Naive thymus-derived CD4-positive, alpha-beta T cell (primary cell): ENCODE measurements at regions of chrX and their contacts with region 1.

Region 1: DNA sequence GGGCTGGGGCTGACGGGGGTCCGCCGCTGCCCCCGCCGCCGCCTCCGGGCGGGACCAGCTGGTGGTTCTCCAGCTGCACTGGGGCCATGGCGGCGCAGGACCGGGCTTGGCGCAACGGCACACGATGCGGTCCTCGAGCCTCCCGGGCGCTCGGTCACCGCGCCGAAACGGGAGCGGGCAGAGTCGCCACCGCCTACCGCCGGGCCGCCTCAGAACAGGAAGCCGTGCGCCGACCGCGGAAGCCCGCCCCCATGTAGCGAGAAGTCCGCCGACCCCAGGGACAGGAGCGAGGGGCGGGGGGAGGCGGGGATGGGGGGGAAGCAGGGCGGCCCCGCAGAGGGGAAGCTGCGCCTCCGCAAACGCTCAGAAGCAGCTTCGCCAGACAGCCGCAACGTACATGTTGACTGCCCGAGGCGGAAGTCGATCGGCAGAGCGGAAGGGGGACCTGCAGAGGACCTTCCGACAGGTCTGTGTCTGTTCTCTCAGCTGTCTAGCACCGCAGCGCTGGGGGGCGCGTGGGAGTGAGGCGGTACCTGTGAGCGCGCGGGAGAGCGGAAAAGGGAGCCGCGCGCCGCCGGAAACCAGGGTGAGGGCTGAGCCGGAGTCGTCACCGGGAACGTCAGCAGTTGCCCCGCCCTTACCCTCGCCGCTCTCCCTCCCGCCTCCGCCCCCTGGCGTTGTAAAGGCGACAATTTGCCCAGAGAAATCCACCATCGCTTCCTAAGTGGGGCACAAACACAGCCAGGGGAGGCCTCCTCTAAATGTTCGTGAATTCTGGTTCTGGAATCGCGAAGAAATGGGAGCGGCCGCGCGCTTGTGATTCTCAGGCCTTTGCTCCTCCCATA is at the start of gene MED14:
- DNase-seq: peak; percentile 74 to 97 (median 96)
- ATAC-seq: peak; percentile 94
- H3K4me3 ChIP-seq: peak within 1 kb of the TSS; percentile 95
- H3K4me3 Mint-ChIP-seq: peak within 1 kb of the TSS; percentile 87 to 99 (median 95)
- H3K27ac ChIP-seq: peak within 1 kb of the TSS; percentile 93
- H3K27ac Mint-ChIP-seq: peak within 1 kb of the TSS; percentile 96 to 100 (median 98)
- H3K4me1 ChIP-seq: peaks cover 6 to 11% of the 10 kb centered on the region in 2 donors
- H3K4me1 Mint-ChIP-seq: peaks cover 9 to 71% (median 48%) of the 10 kb centered on the region in 7 donors
- H3K27me3 ChIP-seq: no peaks in the 10 kb centered on the region
- H3K27me3 Mint-ChIP-seq: no peaks in the 10 kb centered on the region
- total RNA-seq, gene MED14: 37.9 to 49.5 (median 44.3) TPM

Region 2: GRCh38 chrX:40108959-40109287 is 626.6 kb before region 1 on chrX:
- CTCF ChIA-PET with region 1: no interaction called
- POLR2A ChIA-PET with region 1: no interaction called
- intact Hi-C with region 1: loop called in 1 of 2 experiments (anchors 5 kb)
- DNase-seq: peak in 5 of 9 donors; percentile 44 to 64 (median 51)
- ATAC-seq: peak; percentile 59
- H3K4me3 ChIP-seq: peak overlapping the region; percentile 43
- H3K4me3 Mint-ChIP-seq: peak overlapping the region in 9 of 10 donors; percentile 54 to 87 (median 73)
- H3K27ac ChIP-seq: peak overlapping the region; percentile 23
- H3K27ac Mint-ChIP-seq: no peak overlapping the region
- H3K4me1 ChIP-seq: no peaks in the 10 kb centered on the region
- H3K4me1 Mint-ChIP-seq: peaks cover 0 to 28% (median 13%) of the 10 kb centered on the region in 7 donors
- H3K27me3 ChIP-seq: no peaks in the 10 kb centered on the region
- H3K27me3 Mint-ChIP-seq: peaks cover 0 to 7% (median 0%) of the 10 kb centered on the region in 5 donors

Region 3: DNA sequence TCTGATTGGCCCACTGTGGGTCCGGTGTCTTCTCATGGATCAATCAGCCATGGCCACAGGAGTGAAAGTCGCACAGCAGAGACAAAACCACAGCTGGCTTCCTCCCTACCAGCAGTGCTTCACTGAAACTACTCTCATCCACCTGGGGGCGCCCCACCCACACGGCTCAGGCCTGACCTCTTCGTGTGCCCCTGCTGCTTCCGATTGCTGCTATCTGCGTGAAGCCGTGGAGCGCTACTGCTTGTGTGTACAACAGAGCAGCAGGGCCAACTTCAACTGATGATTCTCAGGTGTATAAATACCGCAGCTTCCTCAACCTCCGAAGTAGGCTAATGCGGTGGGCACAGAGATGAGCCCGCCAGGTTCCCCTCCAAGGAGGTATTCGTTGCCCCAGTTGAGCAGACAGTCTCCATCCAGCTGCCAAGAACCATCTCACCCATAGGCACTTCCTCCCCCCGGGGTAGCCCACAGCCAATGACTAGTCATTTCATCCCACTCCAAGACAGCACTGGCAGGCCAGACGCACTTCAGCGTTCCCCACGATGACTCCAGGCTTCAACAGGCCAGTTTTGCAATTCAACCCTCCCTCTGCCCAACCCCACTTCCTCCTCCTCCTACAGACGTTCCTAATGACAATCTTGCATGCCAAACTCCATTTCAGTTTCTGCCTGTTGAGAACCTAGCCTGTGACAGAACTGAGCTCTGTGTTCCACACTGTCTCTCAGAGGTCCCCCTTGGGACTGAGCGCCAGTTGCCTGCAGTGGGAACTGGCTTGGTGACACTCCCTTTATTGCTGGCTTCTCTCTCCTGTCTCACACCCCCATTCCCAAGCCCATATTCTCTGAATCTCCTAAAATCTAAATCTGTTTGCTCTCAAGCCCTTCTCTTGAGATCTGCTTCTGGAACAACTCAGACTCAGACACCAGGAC is 196.1 kb before region 1 on chrX:
- CTCF ChIA-PET with region 1: no interaction called
- POLR2A ChIA-PET with region 1: no interaction called
- intact Hi-C with region 1: loop called in 1 of 2 experiments (anchors 2 kb)
- DNase-seq: peak; percentile 46 to 78 (median 65)
- ATAC-seq: peak; percentile 94
- H3K4me3 ChIP-seq: peak overlapping the region; percentile 13
- H3K4me3 Mint-ChIP-seq: peak overlapping the region; percentile 21 to 76 (median 50)
- H3K27ac ChIP-seq: no peak overlapping the region
- H3K27ac Mint-ChIP-seq: peak overlapping the region; percentile 64 to 90 (median 78)
- H3K4me1 ChIP-seq: peaks cover 4 to 6% of the 10 kb centered on the region in 2 donors
- H3K4me1 Mint-ChIP-seq: peaks cover 15 to 32% (median 24%) of the 10 kb centered on the region in 7 donors
- H3K27me3 ChIP-seq: no peaks in the 10 kb centered on the region
- H3K27me3 Mint-ChIP-seq: peaks cover 0 to 4% (median 0%) of the 10 kb centered on the region in 5 donors

Region 4: GRCh38 chrX:40580537-40581335 is 154.8 kb before region 1 on chrX and contains the start of gene ATP6AP2:
- CTCF ChIA-PET with region 1: no interaction called
- POLR2A ChIA-PET with region 1: interaction called, 10 read pairs
- intact Hi-C with region 1: loop called (anchors 1 to 2 kb)
- DNase-seq: peak; percentile 60 to 91 (median 88)
- ATAC-seq: peak; percentile 96
- H3K4me3 ChIP-seq: peak within 1 kb of the TSS; percentile 81
- H3K4me3 Mint-ChIP-seq: peak within 1 kb of the TSS; percentile 92 to 98 (median 94)
- H3K27ac ChIP-seq: peak within 1 kb of the TSS; percentile 90
- H3K27ac Mint-ChIP-seq: peak within 1 kb of the TSS; percentile 87 to 96 (median 95)
- H3K4me1 ChIP-seq: peaks cover 13 to 16% of the 10 kb centered on the region in 2 donors
- H3K4me1 Mint-ChIP-seq: peaks cover 21 to 38% (median 34%) of the 10 kb centered on the region in 7 donors
- H3K27me3 ChIP-seq: no peaks in the 10 kb centered on the region
- H3K27me3 Mint-ChIP-seq: no peaks in the 10 kb centered on the region
- total RNA-seq, gene ATP6AP2: 72.0 to 98.6 (median 82.5) TPM

Region 5: DNA sequence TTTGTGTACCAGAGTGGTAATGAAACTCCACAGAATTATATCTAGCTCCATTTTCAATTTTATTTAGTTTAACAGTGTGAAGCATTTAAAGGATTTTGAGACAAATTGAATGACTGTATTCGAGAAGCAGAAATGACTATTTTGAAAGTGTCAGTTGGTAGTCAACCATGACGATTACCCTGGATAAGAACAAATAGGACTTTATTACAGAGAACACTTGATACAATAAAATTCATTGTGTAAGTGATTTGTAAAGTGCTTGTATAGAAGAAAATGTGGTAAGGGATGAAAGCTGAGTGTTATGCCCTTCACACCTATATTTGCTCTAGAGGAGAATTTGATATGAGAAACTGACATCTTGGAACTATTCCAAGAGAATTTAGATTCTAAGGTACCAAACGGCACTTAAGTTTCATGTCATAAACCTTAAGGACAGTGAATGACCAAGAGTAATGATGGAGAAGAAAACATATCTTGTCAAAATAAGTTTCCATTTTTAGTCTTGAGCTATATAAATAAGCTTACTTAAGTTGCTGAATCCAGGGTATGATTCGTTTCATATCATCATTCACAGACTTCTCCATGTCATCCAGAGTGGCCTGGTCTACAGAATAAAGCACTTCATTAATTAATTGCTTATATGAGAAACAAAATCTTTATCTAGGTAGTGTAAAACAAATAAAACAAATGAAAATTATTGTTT is 34.8 kb before region 1 on chrX:
- CTCF ChIA-PET with region 1: no interaction called
- POLR2A ChIA-PET with region 1: no interaction called
- intact Hi-C with region 1: loop called in 1 of 2 experiments (anchors 2 kb)
- DNase-seq: no peak
- ATAC-seq: no peak
- H3K4me3 ChIP-seq: no peak overlapping the region
- H3K4me3 Mint-ChIP-seq: no peak overlapping the region
- H3K27ac ChIP-seq: no peak overlapping the region
- H3K27ac Mint-ChIP-seq: no peak overlapping the region
- H3K4me1 ChIP-seq: no peaks in the 10 kb centered on the region
- H3K4me1 Mint-ChIP-seq: peaks cover 0 to 3% (median 0%) of the 10 kb centered on the region in 7 donors
- H3K27me3 ChIP-seq: no peaks in the 10 kb centered on the region
- H3K27me3 Mint-ChIP-seq: no peaks in the 10 kb centered on the region

Region 6: DNA sequence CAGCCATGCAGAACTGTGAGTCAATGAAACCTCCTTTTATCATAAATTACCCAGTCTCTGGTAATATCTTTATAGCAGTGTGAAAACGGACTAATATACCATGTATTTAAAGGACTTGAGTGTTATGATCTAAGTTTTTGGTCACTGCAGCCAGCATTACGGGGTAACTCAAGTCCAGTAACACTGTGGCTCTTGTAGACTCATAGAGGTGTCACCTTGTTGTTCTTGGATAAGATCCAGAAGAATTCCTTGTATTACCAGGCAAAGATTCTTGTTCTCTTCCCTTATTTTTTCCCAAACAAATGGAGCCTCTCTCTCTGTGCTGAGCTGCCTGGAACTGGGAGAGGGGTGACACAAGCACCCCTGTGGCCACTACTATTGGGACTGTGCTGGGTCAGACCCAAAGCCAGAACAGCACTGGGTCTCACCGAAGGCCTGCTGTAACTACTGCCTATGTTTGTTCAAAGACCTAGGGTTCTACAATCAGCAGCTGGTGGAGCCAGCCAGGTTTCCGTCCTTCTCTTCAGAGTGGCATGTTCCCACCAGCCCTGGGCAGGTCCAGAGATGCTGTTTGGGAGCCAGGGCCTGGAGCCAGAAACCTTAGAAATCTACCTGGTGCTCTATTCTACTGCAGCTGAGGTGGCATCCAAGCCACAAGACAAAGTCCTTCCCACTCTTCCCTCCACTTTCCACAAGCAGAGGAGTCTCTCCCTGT is 43.5 kb after region 1 on chrX:
- CTCF ChIA-PET with region 1: no interaction called
- POLR2A ChIA-PET with region 1: no interaction called
- intact Hi-C with region 1: no loop called
- DNase-seq: no peak
- ATAC-seq: no peak
- H3K4me3 ChIP-seq: no peak overlapping the region
- H3K4me3 Mint-ChIP-seq: no peak overlapping the region
- H3K27ac ChIP-seq: no peak overlapping the region
- H3K27ac Mint-ChIP-seq: no peak overlapping the region
- H3K4me1 ChIP-seq: no peaks in the 10 kb centered on the region
- H3K4me1 Mint-ChIP-seq: no peaks in the 10 kb centered on the region
- H3K27me3 ChIP-seq: no peaks in the 10 kb centered on the region
- H3K27me3 Mint-ChIP-seq: no peaks in the 10 kb centered on the region

Region 7: GRCh38 chrX:40792433-40792832 is 56.9 kb after region 1 on chrX:
- CTCF ChIA-PET with region 1: no interaction called
- POLR2A ChIA-PET with region 1: no interaction called
- intact Hi-C with region 1: loop called (anchors 1 to 5 kb)
- DNase-seq: no peak
- ATAC-seq: no peak
- H3K4me3 ChIP-seq: no peak overlapping the region
- H3K4me3 Mint-ChIP-seq: no peak overlapping the region
- H3K27ac ChIP-seq: no peak overlapping the region
- H3K27ac Mint-ChIP-seq: no peak overlapping the region
- H3K4me1 ChIP-seq: no peaks in the 10 kb centered on the region
- H3K4me1 Mint-ChIP-seq: peaks cover 0 to 6% (median 0%) of the 10 kb centered on the region in 7 donors
- H3K27me3 ChIP-seq: no peaks in the 10 kb centered on the region
- H3K27me3 Mint-ChIP-seq: peaks cover 0 to 9% (median 0%) of the 10 kb centered on the region in 5 donors

Region 8: DNA sequence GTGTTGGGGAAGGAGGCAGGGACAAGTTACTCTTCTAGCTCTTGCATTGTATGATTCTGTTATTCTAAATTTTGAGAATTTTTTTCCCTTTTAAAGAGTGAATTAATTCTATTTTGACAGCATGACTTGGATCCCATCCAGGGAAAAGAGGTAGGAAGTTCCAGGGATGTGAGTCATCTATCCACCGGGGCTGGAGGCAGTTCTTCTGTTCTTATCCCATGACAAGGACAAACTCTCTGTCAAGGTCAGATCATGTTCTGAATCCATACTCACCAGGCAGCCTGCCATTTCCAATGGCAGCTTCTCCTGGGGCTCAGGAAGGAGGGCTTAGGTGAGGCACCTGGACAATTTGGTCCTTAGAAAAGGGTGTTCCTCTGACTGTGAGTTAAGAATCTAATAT is 131.8 kb after region 1 on chrX:
- CTCF ChIA-PET with region 1: no interaction called
- POLR2A ChIA-PET with region 1: no interaction called
- intact Hi-C with region 1: no loop called
- DNase-seq: no peak
- ATAC-seq: no peak
- H3K4me3 ChIP-seq: no peak overlapping the region
- H3K4me3 Mint-ChIP-seq: no peak overlapping the region
- H3K27ac ChIP-seq: no peak overlapping the region
- H3K27ac Mint-ChIP-seq: no peak overlapping the region
- H3K4me1 ChIP-seq: no peaks in the 10 kb centered on the region
- H3K4me1 Mint-ChIP-seq: peaks cover 0 to 3% (median 0%) of the 10 kb centered on the region in 7 donors
- H3K27me3 ChIP-seq: no peaks in the 10 kb centered on the region
- H3K27me3 Mint-ChIP-seq: peaks cover 0 to 14% (median 6%) of the 10 kb centered on the region in 5 donors

Region 9: DNA sequence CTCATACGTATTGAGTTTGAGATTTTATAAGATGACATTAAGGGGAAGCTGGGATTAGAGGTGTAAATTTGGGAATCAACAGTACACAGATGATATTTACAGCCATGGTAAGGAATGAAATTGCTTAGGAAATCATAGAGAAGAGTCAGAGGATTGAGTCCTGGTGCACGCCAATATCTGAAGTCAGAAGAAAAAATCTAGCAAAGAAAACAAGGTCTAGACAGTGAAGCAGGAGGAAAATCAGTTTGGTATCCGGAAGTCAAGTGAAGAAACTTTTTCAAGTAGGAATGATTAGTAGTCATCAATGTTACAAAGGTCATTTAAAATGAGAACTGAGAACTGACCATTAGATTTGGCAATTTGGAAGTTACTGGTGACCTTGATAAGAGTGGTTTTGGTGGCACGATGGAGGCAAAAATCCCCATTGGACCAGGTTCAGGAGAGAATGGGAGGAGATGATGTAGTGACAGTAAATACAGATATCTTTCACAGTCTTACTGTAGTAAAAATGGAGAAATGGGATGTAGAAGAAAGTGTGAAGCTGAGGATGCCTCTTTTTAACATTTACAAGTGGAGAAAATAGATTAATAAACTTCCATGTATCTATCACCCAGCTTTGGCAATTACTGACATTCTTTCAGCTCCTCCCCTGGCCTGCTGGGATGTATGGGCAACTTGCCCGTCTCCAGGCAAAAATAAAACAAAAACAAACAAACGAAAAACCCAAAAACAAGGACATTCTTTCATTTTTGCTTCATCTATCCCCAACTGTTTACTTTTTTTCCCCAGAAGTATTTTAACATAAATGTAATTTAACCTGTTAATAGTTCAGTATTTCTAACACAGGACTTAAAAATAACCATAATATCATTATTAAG is 941.9 kb after region 1 on chrX:
- CTCF ChIA-PET with region 1: no interaction called
- POLR2A ChIA-PET with region 1: no interaction called
- intact Hi-C with region 1: no loop called
- DNase-seq: no peak
- ATAC-seq: no peak
- H3K4me3 ChIP-seq: no peak overlapping the region
- H3K4me3 Mint-ChIP-seq: no peak overlapping the region
- H3K27ac ChIP-seq: no peak overlapping the region
- H3K27ac Mint-ChIP-seq: peak overlapping the region in 1 of 9 donors; percentile 11
- H3K4me1 ChIP-seq: no peaks in the 10 kb centered on the region
- H3K4me1 Mint-ChIP-seq: peaks cover 0 to 20% (median 5%) of the 10 kb centered on the region in 7 donors
- H3K27me3 ChIP-seq: no peaks in the 10 kb centered on the region
- H3K27me3 Mint-ChIP-seq: no peaks in the 10 kb centered on the region